ENCODE measurements at regions of chr10 and their contacts with region 1.

Region 1: DNA sequence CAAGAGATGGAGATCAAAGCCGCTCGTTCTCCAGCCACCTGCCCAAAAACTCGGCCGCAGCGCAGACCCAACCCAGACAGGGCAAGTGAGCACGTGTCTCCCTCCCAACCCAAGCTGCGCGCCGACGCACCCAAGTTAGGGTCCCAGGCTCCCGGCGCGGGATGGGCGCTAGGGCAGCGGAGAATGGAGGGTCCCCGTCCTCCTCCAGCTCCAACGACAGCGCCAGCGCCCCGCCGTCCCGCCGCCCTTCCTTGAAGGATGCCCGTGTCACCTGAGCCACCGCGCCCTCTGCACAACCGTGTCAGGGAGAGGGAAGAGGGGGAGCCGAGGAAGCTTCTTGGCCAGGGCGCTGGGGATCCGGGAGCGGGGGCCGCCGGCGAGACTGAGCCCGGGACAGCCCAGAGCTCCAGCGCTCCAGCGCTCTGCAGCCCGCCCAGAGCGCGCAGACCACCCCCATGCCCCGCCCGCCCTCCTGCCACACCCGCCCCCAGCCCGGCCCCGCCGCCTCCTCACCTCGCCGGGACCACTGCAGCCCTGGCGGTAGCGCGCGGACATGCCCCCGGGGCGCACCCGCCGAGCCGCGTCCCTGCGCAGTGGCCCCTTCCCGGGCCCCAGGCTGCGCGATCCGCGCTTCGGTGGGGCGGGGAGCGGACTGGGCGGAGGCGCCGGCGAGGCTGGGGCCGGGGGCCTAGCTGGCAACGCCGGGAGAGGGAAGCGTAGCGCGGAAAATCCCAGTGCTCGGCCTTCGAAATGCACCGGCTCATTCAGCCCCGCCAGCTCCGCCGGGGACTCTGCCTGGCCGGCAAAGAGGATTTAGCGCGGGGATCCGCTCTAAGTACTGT is at the start of gene SLC16A12:
- DNase-seq: peak; percentile 78
- ATAC-seq: peak; percentile 75
- H3K4me3 Mint-ChIP-seq: peak within 1 kb of the TSS; percentile 71
- H3K27ac Mint-ChIP-seq: peak within 1 kb of the TSS; percentile 99
- H3K4me1 Mint-ChIP-seq: peaks cover 52% of the 10 kb centered on the region
- H3K27me3 Mint-ChIP-seq: peaks cover 21% of the 10 kb centered on the region
- CTCF ChIP-seq: no peak
- total RNA-seq, gene SLC16A12: 8.0 to 10.9 TPM (median 8.3 TPM) in 3 replicates

Region 2: GRCh38 chr10:89555701-89556445 is 20.5 kb after region 1 on chr10:
- CTCF ChIA-PET with region 1: interaction called, 16 read pairs
- POLR2A ChIA-PET with region 1: interaction called, 3 read pairs
- DNase-seq: peak; percentile 33
- ATAC-seq: peak; percentile 56
- H3K4me3 Mint-ChIP-seq: no peak overlapping the region
- H3K27ac Mint-ChIP-seq: no peak overlapping the region
- H3K4me1 Mint-ChIP-seq: peaks cover 14% of the 10 kb centered on the region
- H3K27me3 Mint-ChIP-seq: no peaks in the 10 kb centered on the region; the same call in 1 of the 2 replicates
- CTCF ChIP-seq: no peak